ENCODE measurements at regions of chr3 and their contacts with region 1.

Region 1: DNA sequence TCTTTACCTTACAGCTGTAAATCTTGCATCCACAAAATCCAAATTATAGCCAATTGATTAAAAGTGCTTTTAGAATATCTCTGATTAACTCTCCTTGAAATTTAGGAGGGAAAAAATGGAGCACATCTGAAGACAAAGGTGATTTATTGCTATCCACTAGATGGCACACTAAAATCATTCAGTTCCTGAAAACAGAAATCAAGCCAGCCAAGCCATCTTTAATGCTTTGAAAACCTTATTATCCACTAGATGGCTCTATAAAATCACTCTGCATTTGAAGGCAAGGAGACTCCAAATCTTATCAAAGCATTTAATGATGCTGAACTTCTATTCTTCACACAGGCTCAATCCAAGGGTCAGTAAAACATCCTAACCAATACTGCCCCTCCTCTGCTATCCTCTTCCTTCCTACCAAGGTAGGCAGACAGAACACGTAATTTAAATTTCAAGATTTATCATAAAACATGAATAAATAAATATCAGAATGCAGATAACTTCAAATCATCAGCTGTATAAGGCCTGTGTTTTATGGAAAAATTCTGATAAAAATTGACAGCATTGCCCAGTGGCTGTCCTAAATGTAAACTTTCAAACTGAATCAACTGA is 48.4 kb downstream of the GOLIM4 start:
- DNase-seq: peak in 1 of 2 experiments; percentile 55
- H3K4me3 ChIP-seq: no peak overlapping the region
- H3K4me3 Mint-ChIP-seq: no peak overlapping the region
- H3K27ac Mint-ChIP-seq: no peak overlapping the region
- H3K4me1 ChIP-seq: no peaks in the 10 kb centered on the region
- H3K4me1 Mint-ChIP-seq: peaks cover 7% of the 10 kb centered on the region
- H3K27me3 ChIP-seq: no peaks in the 10 kb centered on the region
- H3K27me3 Mint-ChIP-seq: no peaks in the 10 kb centered on the region
- CTCF ChIP-seq: peak; percentile 67 to 74

Region 2: GRCh38 chr3:167837466-167837865 is 209.8 kb before region 1 on chr3:
- CTCF ChIA-PET with region 1: no interaction called
- POLR2A ChIA-PET with region 1: no interaction called
- intact Hi-C with region 1: no loop called
- DNase-seq: no peak
- H3K4me3 ChIP-seq: no peak overlapping the region
- H3K4me3 Mint-ChIP-seq: no peak overlapping the region
- H3K27ac Mint-ChIP-seq: no peak overlapping the region
- H3K4me1 ChIP-seq: no peaks in the 10 kb centered on the region
- H3K4me1 Mint-ChIP-seq: no peaks in the 10 kb centered on the region
- H3K27me3 ChIP-seq: no peaks in the 10 kb centered on the region
- H3K27me3 Mint-ChIP-seq: no peaks in the 10 kb centered on the region
- CTCF ChIP-seq: no peak

Region 3: DNA sequence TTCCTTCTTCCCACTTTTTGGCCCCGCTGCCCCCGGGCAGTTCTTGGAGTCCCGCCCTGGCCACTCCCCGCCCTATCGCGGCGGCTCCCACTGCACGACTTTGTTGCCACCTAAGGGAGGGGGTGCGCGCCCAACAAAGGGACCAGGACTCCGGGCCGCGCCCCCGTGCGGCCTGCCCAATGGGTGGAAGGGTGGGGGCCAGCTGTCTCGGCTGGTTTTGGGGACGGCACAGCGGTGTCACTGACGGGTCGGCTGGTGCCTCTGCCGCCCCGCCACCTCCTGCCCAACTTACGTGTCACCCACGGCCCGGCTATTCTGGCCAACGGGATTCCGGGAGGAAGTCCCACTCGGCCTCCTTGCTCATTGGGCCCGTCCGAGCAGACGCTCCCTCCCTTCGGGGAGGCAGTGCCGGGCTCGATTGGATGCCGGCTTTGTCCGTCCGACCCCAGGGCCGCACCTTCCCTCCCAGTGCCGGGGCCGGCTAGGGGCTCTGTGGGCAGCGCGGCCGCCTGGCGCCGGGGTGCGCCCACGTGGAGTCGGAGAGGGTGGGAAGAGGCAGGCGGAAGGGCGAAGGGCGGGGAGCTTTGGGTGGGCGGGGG is 48.4 kb after region 1 on chr3 and contains the start of gene GOLIM4:
- CTCF ChIA-PET with region 1: no interaction called
- POLR2A ChIA-PET with region 1: no interaction called
- intact Hi-C with region 1: loop called (anchors 1 kb)
- DNase-seq: peak; percentile 95 to 96
- H3K4me3 ChIP-seq: peak within 1 kb of the TSS; percentile 86
- H3K4me3 Mint-ChIP-seq: peak within 1 kb of the TSS; percentile 88
- H3K27ac Mint-ChIP-seq: peak within 1 kb of the TSS; percentile 70
- H3K4me1 ChIP-seq: peaks cover 26% of the 10 kb centered on the region
- H3K4me1 Mint-ChIP-seq: peaks cover 12% of the 10 kb centered on the region
- H3K27me3 ChIP-seq: no peaks in the 10 kb centered on the region
- H3K27me3 Mint-ChIP-seq: no peaks in the 10 kb centered on the region
- CTCF ChIP-seq: peak in 1 of 2 experiments; percentile 17
- total RNA-seq, gene GOLIM4: 17.4 and 19.4 TPM in 2 replicates

Region 4: DNA sequence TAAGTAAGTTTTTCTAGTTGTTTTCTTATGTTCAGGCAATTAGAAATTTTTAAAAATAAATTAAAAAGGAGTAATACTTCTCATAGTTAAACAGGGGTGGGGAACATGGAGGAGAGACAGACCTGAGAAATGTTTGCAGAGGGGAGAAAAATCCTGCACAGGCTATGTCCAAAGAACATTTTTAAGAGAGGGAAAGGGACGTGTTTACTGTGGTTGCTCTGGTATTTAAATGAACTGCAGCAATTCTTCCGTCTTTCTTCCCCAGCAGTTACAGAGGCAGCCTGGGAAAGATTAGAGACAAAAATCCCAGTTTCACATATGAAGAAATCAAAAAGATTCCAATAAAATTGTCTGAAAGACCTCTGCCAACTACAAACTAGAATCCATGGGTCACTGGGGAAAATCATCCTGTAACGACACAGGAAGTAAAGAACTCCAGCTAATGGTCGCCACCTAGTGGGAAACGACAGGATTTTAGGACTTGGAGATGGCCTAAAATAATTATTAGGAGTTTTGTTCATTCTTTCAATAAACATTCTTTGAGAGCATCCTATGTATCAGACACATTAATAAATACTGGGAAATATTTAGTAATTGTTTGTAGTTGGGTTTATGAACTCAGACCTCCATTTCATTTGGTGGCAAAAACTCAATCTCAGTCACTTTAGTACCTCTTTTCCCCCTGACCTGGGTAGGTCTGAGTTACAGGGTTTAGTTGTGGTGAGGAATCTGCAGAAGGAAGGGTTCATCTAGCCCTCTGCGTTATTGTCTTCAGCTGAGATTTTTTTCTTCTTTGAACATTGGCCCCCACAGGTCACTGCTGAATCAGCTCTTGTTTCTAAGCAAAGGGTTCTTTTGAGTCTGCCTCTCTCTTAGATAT is 118.3 kb after region 1 on chr3:
- CTCF ChIA-PET with region 1: interaction called, 7 read pairs
- POLR2A ChIA-PET with region 1: no interaction called
- intact Hi-C with region 1: loop called (anchors 1 kb)
- DNase-seq: peak; percentile 53 to 55
- H3K4me3 ChIP-seq: no peak overlapping the region
- H3K4me3 Mint-ChIP-seq: no peak overlapping the region
- H3K27ac Mint-ChIP-seq: no peak overlapping the region
- H3K4me1 ChIP-seq: no peaks in the 10 kb centered on the region
- H3K4me1 Mint-ChIP-seq: no peaks in the 10 kb centered on the region
- H3K27me3 ChIP-seq: no peaks in the 10 kb centered on the region
- H3K27me3 Mint-ChIP-seq: no peaks in the 10 kb centered on the region
- CTCF ChIP-seq: peak; percentile 68 to 73

Region 5: GRCh38 chr3:168327856-168328255 is 280.6 kb after region 1 on chr3:
- CTCF ChIA-PET with region 1: no interaction called
- POLR2A ChIA-PET with region 1: no interaction called
- intact Hi-C with region 1: no loop called
- DNase-seq: no peak
- H3K4me3 ChIP-seq: no peak overlapping the region
- H3K4me3 Mint-ChIP-seq: no peak overlapping the region
- H3K27ac Mint-ChIP-seq: no peak overlapping the region
- H3K4me1 ChIP-seq: no peaks in the 10 kb centered on the region
- H3K4me1 Mint-ChIP-seq: no peaks in the 10 kb centered on the region
- H3K27me3 ChIP-seq: no peaks in the 10 kb centered on the region
- H3K27me3 Mint-ChIP-seq: no peaks in the 10 kb centered on the region
- CTCF ChIP-seq: no peak

Region 6: GRCh38 chr3:168467115-168467714 is 419.9 kb after region 1 on chr3:
- CTCF ChIA-PET with region 1: no interaction called
- POLR2A ChIA-PET with region 1: no interaction called
- intact Hi-C with region 1: loop called (anchors 1 kb)
- DNase-seq: peak in 1 of 2 experiments; percentile 16
- H3K4me3 ChIP-seq: no peak overlapping the region
- H3K4me3 Mint-ChIP-seq: no peak overlapping the region
- H3K27ac Mint-ChIP-seq: no peak overlapping the region
- H3K4me1 ChIP-seq: no peaks in the 10 kb centered on the region
- H3K4me1 Mint-ChIP-seq: no peaks in the 10 kb centered on the region
- H3K27me3 ChIP-seq: no peaks in the 10 kb centered on the region; the same call in 1 of the 2 replicates
- H3K27me3 Mint-ChIP-seq: peaks cover 1% of the 10 kb centered on the region
- CTCF ChIP-seq: peak in 1 of 2 experiments; percentile 43

Region 7: DNA sequence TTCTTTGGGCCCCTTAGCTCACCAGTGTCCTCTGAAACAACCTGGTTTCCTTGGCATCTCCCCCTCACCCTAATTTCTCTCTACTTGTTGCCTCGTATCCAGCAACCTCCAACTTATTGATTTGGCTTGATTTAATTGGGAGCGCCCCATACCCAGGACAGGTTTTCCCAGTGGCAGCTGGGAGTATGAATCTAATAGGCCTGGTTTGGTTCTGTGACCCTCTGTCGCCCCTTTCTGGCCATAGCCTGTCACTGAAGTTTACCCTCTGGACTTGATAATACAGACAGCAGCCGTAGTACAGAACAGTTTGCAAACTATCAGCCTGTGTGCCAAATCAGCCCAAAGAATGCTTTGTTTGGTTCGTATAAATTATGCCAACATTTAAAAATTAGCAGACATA is 573.5 kb after region 1 on chr3:
- CTCF ChIA-PET with region 1: no interaction called
- POLR2A ChIA-PET with region 1: no interaction called
- intact Hi-C with region 1: loop called (anchors 5 kb)
- DNase-seq: peak; percentile 54 to 63
- H3K4me3 ChIP-seq: no peak overlapping the region
- H3K4me3 Mint-ChIP-seq: no peak overlapping the region
- H3K27ac Mint-ChIP-seq: no peak overlapping the region
- H3K4me1 ChIP-seq: no peaks in the 10 kb centered on the region
- H3K4me1 Mint-ChIP-seq: no peaks in the 10 kb centered on the region
- H3K27me3 ChIP-seq: no peaks in the 10 kb centered on the region
- H3K27me3 Mint-ChIP-seq: peaks cover 8% of the 10 kb centered on the region
- CTCF ChIP-seq: peak; percentile 62 to 86

Region 8: DNA sequence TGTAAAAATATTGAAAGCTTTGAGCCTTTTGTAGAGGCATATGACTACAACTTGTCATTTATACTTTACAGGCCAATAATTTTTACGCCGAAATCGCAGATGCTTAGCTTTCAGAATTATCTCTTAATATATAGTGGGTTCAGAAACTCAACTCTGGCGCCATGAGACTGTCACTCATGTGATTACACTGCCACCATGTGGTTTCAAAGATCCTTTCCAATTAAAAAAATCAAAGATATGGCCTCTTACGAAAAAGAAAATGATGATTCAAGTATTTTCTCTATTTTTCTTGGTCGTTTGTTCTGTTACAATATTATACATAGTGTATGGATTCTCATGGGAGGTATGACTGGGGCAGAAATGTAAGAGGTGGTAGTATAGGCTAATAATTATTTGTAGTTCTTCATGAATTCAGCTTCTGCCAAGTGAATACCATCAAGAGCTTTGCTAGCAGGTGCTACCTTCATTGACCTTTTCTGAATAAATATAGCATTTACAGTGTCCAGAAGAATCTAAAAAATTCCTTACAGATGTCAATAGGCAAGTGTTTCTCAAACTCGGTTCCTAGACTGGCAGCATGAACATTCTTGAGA is 800.1 kb after region 1 on chr3:
- CTCF ChIA-PET with region 1: no interaction called
- POLR2A ChIA-PET with region 1: no interaction called
- intact Hi-C with region 1: loop called (anchors 10 kb)
- DNase-seq: peak in 1 of 2 experiments; percentile 35
- H3K4me3 ChIP-seq: no peak overlapping the region
- H3K4me3 Mint-ChIP-seq: no peak overlapping the region
- H3K27ac Mint-ChIP-seq: no peak overlapping the region
- H3K4me1 ChIP-seq: no peaks in the 10 kb centered on the region
- H3K4me1 Mint-ChIP-seq: no peaks in the 10 kb centered on the region
- H3K27me3 ChIP-seq: no peaks in the 10 kb centered on the region
- H3K27me3 Mint-ChIP-seq: peaks cover 17% of the 10 kb centered on the region
- CTCF ChIP-seq: peak; percentile 55 to 56

Region 9: DNA sequence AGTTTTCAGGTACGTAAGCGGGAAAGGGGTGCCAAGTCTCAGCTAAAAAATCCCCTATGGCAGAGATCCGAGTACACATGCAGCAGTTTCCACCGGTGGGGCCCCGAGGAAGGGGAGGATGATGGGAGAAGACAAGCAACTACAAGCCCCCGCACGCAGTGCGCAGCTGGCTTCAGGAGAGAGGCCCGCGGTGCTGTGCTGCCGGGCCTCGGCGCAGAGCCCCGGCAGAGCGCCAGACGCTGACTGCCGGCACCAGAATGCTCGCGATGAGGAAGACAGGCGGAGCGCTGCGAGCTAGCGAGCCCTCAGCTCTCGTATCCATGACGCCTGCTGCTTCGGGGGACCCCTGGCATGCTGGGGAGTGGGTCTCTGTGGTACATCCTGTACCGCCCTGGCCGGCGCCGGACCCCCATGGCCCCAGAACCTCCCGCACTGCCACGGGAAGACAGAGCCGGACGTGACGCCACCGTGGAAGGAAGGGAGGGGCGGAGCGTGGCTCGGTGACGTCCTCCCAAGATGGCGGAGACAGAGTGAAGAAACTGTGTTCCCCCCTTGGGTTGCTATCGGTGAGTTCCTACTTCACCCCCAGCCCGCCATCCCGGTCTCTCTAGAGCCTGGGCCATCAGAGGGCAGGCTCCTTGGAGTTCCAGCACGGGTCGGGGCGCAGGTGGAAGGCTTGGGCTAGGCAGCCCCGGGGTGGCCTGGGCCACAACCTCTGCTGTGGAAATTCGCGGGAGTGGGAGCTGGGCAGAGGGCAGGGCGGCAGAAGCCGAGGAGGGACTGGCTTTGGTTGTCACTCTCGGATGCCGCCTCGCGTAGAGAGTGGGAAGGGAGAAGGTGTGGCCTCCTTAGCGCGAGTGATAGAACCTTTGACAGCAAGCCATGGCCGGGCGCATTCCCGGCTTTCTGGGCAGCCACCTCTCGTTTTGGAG is 1725.9 kb after region 1 on chr3 and contains the start of gene MYNN:
- CTCF ChIA-PET with region 1: no interaction called
- POLR2A ChIA-PET with region 1: interaction called, 18 read pairs
- intact Hi-C with region 1: no loop called
- DNase-seq: peak; percentile 89 to 92
- H3K4me3 ChIP-seq: peak within 1 kb of the TSS; percentile 90
- H3K4me3 Mint-ChIP-seq: peak within 1 kb of the TSS; percentile 94
- H3K27ac Mint-ChIP-seq: peak within 1 kb of the TSS; percentile 98
- H3K4me1 ChIP-seq: no peaks in the 10 kb centered on the region
- H3K4me1 Mint-ChIP-seq: peaks cover 5% of the 10 kb centered on the region
- H3K27me3 ChIP-seq: no peaks in the 10 kb centered on the region
- H3K27me3 Mint-ChIP-seq: no peaks in the 10 kb centered on the region
- CTCF ChIP-seq: peak in 1 of 2 experiments; percentile 24
- total RNA-seq, gene MYNN: 9.8 and 10.6 TPM in 2 replicates

Measured in Caco-2 (cell line).